Caco-2 (cell line): ENCODE measurements at regions of chr6 and their contacts with region 1.

Region 1: GRCh38 chr6:111997078-111997852 is 56.6 kb upstream of the CCN6 start:
- DNase-seq: peak; percentile 80
- H3K4me3 ChIP-seq: no peak overlapping the region
- H3K4me3 Mint-ChIP-seq: no peak overlapping the region
- H3K27ac Mint-ChIP-seq: no peak overlapping the region
- H3K4me1 ChIP-seq: no peaks in the 10 kb centered on the region
- H3K4me1 Mint-ChIP-seq: no peaks in the 10 kb centered on the region
- H3K27me3 ChIP-seq: no peaks in the 10 kb centered on the region
- H3K27me3 Mint-ChIP-seq: peaks cover 4% of the 10 kb centered on the region
- CTCF ChIP-seq: peak; percentile 77 to 80

Region 2: GRCh38 chr6:111483736-111484632 is 513.3 kb before region 1 on chr6:
- CTCF ChIA-PET with region 1: no interaction called
- POLR2A ChIA-PET with region 1: no interaction called
- intact Hi-C with region 1: loop called (anchors 10 kb)
- DNase-seq: peak; percentile 93 to 94
- H3K4me3 ChIP-seq: peak overlapping the region; percentile 61
- H3K4me3 Mint-ChIP-seq: peak overlapping the region; percentile 96
- H3K27ac Mint-ChIP-seq: peak overlapping the region; percentile 98
- H3K4me1 ChIP-seq: peaks cover 7% of the 10 kb centered on the region; the same call in 1 of the 2 replicates
- H3K4me1 Mint-ChIP-seq: peaks cover 14% of the 10 kb centered on the region
- H3K27me3 ChIP-seq: no peaks in the 10 kb centered on the region
- H3K27me3 Mint-ChIP-seq: no peaks in the 10 kb centered on the region
- CTCF ChIP-seq: no peak

Region 3: DNA sequence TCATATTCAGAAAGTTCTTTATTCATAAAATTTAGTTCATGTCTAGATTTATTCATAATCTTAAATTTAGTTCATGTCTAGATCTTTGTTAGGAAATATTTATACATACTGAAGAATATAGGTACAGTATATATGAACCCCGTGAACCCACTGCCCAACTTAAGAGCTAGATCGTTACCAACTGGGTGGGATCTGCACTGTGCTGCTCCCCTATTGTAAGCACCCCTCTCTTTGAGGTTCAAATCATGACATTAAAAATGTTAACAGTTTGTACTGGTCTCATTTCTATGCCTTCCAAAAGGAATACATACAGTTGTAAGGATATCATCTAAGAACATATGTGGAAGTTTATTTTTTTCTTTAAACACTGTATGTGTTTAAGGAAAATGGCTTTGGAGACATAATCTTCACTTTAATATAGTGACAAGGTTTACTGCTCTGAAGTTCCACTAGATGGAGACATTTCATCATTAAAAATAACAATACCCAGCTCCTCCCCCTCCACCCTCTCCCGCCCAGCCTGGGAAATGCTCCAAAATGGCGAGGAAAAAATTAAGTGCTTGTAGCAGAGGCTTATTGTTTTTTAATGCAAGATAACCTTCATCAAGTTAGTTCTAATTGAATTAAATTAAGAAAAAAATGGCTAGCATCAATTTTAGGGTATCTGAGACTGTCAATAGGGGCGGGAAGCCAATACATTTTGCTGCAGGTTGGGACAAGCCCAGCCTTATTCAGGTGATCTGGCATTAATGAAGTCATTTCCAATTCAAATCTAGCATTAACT is 287.5 kb before region 1 on chr6:
- CTCF ChIA-PET with region 1: interaction called, 3 read pairs
- POLR2A ChIA-PET with region 1: no interaction called
- intact Hi-C with region 1: loop called (anchors 1 kb)
- DNase-seq: peak in 1 of 2 experiments; percentile 57
- H3K4me3 ChIP-seq: no peak overlapping the region
- H3K4me3 Mint-ChIP-seq: no peak overlapping the region
- H3K27ac Mint-ChIP-seq: no peak overlapping the region
- H3K4me1 ChIP-seq: no peaks in the 10 kb centered on the region
- H3K4me1 Mint-ChIP-seq: no peaks in the 10 kb centered on the region
- H3K27me3 ChIP-seq: no peaks in the 10 kb centered on the region
- H3K27me3 Mint-ChIP-seq: no peaks in the 10 kb centered on the region
- CTCF ChIP-seq: peak; percentile 42 to 57

Region 4: GRCh38 chr6:111777357-111777756 is 219.9 kb before region 1 on chr6:
- CTCF ChIA-PET with region 1: no interaction called
- POLR2A ChIA-PET with region 1: no interaction called
- intact Hi-C with region 1: loop called (anchors 1 kb)
- DNase-seq: peak in 1 of 2 experiments; percentile 10
- H3K4me3 ChIP-seq: no peak overlapping the region
- H3K4me3 Mint-ChIP-seq: no peak overlapping the region
- H3K27ac Mint-ChIP-seq: no peak overlapping the region
- H3K4me1 ChIP-seq: peaks cover 5% of the 10 kb centered on the region; the same call in 1 of the 2 replicates
- H3K4me1 Mint-ChIP-seq: no peaks in the 10 kb centered on the region
- H3K27me3 ChIP-seq: no peaks in the 10 kb centered on the region
- H3K27me3 Mint-ChIP-seq: no peaks in the 10 kb centered on the region
- CTCF ChIP-seq: peak in 1 of 2 experiments; percentile 15

Region 5: DNA sequence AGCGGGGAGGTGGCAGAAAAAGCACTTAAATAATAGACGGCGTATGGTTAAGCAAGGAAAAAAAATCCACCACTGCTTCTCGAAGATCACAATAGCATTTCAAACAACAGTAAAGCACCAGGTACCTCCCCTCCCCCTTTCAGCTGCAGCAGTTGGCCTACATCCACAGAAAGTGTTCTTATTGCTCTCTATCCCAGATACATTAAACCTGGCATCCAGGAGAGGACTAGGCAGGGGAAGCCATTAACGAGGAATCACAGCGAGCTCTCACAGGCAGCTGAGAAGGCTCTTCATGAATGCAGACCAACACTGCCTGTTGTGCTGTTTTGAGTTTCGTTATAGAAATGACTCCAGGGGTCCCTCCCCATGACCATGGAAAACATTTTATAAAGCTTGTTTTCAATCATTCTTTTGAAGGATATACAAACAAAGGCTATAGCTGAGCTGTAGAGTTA is 135.8 kb before region 1 on chr6:
- CTCF ChIA-PET with region 1: no interaction called
- POLR2A ChIA-PET with region 1: no interaction called
- intact Hi-C with region 1: no loop called
- DNase-seq: no peak
- H3K4me3 ChIP-seq: no peak overlapping the region
- H3K4me3 Mint-ChIP-seq: no peak overlapping the region
- H3K27ac Mint-ChIP-seq: no peak overlapping the region
- H3K4me1 ChIP-seq: no peaks in the 10 kb centered on the region
- H3K4me1 Mint-ChIP-seq: no peaks in the 10 kb centered on the region
- H3K27me3 ChIP-seq: no peaks in the 10 kb centered on the region
- H3K27me3 Mint-ChIP-seq: peaks cover 5% of the 10 kb centered on the region
- CTCF ChIP-seq: no peak

Region 6: DNA sequence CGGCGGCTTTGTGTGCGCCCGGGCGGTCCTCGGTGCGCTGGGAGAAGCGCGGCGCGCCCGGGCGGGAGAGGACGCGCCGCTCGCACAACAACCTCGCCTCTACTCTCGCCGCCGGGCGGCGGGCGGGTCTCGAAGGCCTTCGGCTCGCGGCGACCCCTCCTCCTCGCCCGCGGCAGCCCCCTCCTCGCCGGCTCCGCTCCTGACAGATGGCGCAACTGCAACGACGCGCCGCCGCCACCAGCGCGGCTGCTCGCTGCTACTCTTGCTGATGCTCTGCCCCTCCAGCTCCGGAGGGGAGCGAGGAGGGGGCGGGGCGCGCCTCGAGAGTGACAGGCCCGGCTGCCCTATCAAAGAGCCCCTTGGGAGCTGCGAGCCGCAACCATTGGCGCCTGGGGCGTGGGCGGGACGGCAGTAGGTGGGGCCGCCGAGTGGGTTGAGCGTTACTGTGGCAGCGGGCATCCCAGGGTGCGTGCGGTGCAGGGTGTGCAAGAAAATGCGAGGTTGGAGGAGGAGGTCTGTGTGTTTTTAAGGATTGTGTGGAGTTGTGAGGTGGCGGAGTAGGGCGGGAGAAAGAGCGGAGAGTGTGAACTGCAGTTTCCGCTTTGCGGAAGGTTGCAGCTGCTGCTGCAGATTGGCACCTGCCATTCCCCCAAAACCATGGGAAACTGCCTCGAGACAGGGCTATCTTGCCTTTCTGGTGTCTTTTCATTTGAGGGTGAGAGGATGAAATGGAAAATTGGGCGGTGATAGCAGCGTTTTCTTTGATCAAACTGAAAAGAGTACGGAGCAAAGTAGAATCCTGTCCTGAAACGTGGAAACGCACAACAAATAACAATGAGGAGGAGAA is 123.9 kb before region 1 on chr6 and contains the start of gene FYN:
- CTCF ChIA-PET with region 1: no interaction called
- POLR2A ChIA-PET with region 1: no interaction called
- intact Hi-C with region 1: loop called (anchors 5 kb)
- DNase-seq: peak; percentile 94 to 98
- H3K4me3 ChIP-seq: peak within 1 kb of the TSS; percentile 38
- H3K4me3 Mint-ChIP-seq: peak within 1 kb of the TSS; percentile 85
- H3K27ac Mint-ChIP-seq: no peak within 1 kb of the TSS
- H3K4me1 ChIP-seq: peaks cover 8% of the 10 kb centered on the region
- H3K4me1 Mint-ChIP-seq: no peaks in the 10 kb centered on the region
- H3K27me3 ChIP-seq: no peaks in the 10 kb centered on the region; the same call in 1 of the 2 replicates
- H3K27me3 Mint-ChIP-seq: peaks cover 12% of the 10 kb centered on the region
- CTCF ChIP-seq: peak in 1 of 2 experiments; percentile 31
- total RNA-seq, gene FYN: 7.2 and 7.6 TPM in 2 replicates

Region 7: DNA sequence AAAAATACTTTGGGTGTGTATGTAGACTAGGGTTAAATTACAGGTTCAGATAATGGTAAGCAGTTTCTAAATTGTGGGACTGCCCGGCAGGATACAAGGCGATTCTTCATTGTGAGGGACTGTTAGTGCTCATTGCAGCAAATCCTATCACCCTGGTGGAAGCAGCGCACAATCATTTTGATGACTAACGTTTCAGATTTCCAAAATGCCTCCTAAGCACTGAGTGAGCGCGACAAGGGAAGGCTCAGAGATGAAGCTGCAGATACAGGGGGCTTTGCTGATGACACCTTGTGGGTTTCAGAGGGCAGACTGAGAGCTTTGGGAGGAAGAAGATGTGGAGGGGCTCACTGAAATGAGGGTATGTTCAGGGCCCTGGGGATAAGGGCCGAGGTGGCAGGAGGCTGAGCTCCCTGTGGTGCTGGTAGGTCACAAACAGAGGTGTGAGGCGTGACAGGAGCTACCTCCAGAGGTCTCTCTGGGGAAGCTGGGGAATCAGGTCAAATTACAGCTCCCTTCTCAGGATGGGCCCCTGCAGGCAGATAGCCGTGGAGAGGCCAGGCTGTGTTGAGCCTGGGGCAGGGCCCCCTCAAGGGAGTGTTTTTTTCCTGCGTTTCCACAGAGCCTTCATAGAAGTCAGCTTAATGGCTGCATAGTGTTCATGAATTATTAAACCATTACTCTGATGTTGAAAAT is 39.5 kb before region 1 on chr6:
- CTCF ChIA-PET with region 1: no interaction called
- POLR2A ChIA-PET with region 1: no interaction called
- intact Hi-C with region 1: loop called (anchors 5 kb)
- DNase-seq: peak in 1 of 2 experiments; percentile 10
- H3K4me3 ChIP-seq: no peak overlapping the region
- H3K4me3 Mint-ChIP-seq: no peak overlapping the region
- H3K27ac Mint-ChIP-seq: no peak overlapping the region
- H3K4me1 ChIP-seq: no peaks in the 10 kb centered on the region
- H3K4me1 Mint-ChIP-seq: peaks cover 4% of the 10 kb centered on the region
- H3K27me3 ChIP-seq: no peaks in the 10 kb centered on the region; the same call in 1 of the 2 replicates
- H3K27me3 Mint-ChIP-seq: peaks cover 5% of the 10 kb centered on the region
- CTCF ChIP-seq: no peak